HepG2 (cell line): ENCODE measurements at regions of chr15 and their contacts with region 1.

Region 1: DNA sequence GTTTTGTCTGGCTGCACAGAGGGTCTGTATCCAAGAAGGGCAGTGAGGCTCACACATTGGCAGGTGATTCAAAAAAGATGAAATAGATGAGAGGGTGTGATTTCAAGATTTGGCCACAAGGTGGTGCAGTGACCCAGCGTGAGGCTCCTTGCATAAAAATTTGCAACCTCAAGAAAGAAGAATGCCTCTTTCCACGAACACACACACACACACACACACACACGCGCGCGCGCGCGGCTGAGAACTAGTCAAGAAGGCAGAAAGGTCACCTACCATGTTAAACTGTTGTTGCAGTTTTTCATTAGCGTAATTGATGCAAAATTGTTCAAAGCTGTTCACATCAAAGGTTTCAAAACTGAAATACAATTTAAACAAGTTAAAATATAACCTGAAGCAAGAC is 39.2 kb downstream of the MYO5C start:
- DNase-seq: peak; percentile 45
- ATAC-seq: peak; percentile 38; the same call in 2 of the 3 replicates
- H3K4me3 ChIP-seq: no peak overlapping the region
- H3K27ac ChIP-seq: no peak overlapping the region
- H3K4me1 ChIP-seq: 0 out of 2 replicates have a peak, but pooled peaks cover under 1% of the 10 kb centered on the region
- H3K27me3 ChIP-seq: no peaks in the 10 kb centered on the region
- CTCF ChIP-seq: peak; percentile 82
- EP300 ChIP-seq: no peak
- POLR2A ChIP-seq: no peak
- RAD21 ChIP-seq: peak; percentile 86

Region 2: DNA sequence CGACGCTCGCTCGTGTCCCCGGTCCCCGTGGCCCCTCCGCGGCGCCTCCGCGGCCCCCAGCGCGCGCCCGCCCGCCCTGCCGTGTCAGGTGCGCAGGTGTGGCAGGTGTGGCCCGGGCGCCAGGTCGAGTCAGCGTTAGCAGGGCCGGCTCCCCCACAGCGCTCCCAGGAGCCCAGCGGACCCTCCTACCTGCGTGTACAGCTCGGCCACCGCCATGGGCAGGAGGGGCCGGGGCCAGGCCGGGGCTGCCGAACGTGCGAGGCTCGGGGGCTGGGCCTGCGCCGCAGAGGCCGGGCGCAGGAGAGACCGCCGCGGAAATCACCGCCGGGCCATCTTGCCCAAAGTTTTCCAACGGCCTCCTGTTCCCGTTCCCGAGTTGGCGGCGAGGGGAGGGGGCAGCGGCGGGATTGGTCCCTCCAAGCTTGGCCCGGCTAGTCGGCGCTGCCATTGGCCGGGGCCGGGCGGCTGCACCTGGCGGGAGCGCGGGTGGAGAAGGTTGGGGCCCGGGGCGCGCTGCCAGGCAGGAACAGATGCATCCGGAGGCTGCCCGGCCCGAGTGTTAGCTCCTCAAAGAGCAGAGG is 39.1 kb after region 1 on chr15 and contains the start of gene MYO5C:
- CTCF ChIA-PET with region 1: no interaction called
- POLR2A ChIA-PET with region 1: no interaction called
- in situ Hi-C with region 1: no loop called
- intact Hi-C with region 1: loop called (anchors 2 kb)
- DNase-seq: peak; percentile 68
- ATAC-seq: peak; percentile 96
- H3K4me3 ChIP-seq: peak within 1 kb of the TSS; percentile 68 to 87 (median 71)
- H3K27ac ChIP-seq: peak within 1 kb of the TSS; percentile 70
- H3K4me1 ChIP-seq: peaks cover 47% of the 10 kb centered on the region
- H3K27me3 ChIP-seq: no peaks in the 10 kb centered on the region
- CTCF ChIP-seq: no peak
- EP300 ChIP-seq: no peak
- POLR2A ChIP-seq: peak; percentile 70 to 71
- RAD21 ChIP-seq: peak; percentile 49; the same call in 1 of the 2 replicates
- total RNA-seq, gene MYO5C: 23.7 and 37.3 TPM in 2 replicates

Region 3: GRCh38 chr15:52318729-52319500 is 62.5 kb after region 1 on chr15:
- CTCF ChIA-PET with region 1: no interaction called
- POLR2A ChIA-PET with region 1: no interaction called
- in situ Hi-C with region 1: no loop called
- intact Hi-C with region 1: no loop called
- DNase-seq: no peak
- ATAC-seq: no peak
- H3K4me3 ChIP-seq: no peak overlapping the region
- H3K27ac ChIP-seq: no peak overlapping the region
- H3K4me1 ChIP-seq: no peaks in the 10 kb centered on the region
- H3K27me3 ChIP-seq: no peaks in the 10 kb centered on the region
- CTCF ChIP-seq: no peak
- EP300 ChIP-seq: no peak
- POLR2A ChIP-seq: no peak
- RAD21 ChIP-seq: no peak

Region 4: DNA sequence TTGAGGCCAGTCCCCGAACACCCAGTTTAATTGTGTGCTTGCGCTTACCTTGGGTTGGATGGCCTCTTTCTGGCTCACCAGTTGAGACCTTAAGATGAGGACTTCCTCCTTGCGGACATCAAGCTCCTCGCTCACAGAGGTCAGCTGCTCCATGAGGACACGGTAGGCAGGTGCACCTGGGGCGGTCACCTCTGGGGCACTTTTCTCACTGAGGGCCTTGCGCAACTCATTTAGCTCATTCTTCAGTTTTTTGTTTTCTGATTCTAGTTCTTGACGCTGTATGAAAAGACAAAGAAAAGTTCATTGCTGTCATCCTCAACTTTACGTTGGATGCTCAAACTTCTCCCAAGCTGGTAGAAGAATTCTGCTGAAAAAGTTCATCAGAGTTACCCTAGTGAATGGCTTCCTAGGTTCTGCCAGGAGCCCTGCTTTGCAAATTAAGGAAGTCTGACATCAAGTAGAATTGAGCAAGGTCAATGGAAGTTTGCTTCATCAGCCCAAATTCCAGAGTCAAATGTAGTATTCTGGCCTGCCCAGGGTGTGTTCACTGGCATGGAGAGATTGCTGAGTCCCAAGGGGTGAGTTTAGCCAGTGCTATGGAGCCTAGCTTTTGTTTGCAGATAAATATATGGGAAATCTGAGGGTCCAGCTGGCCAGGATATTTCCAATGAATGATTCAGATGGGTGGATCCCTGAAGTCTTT is 95.0 kb after region 1 on chr15:
- CTCF ChIA-PET with region 1: interaction called, 4 read pairs
- POLR2A ChIA-PET with region 1: no interaction called
- in situ Hi-C with region 1: no loop called
- intact Hi-C with region 1: loop called (anchors 5 kb)
- DNase-seq: no peak
- ATAC-seq: no peak
- H3K4me3 ChIP-seq: no peak overlapping the region
- H3K27ac ChIP-seq: no peak overlapping the region
- H3K4me1 ChIP-seq: no peaks in the 10 kb centered on the region
- H3K27me3 ChIP-seq: no peaks in the 10 kb centered on the region
- CTCF ChIP-seq: no peak
- EP300 ChIP-seq: no peak
- POLR2A ChIP-seq: no peak
- RAD21 ChIP-seq: no peak

Region 5: DNA sequence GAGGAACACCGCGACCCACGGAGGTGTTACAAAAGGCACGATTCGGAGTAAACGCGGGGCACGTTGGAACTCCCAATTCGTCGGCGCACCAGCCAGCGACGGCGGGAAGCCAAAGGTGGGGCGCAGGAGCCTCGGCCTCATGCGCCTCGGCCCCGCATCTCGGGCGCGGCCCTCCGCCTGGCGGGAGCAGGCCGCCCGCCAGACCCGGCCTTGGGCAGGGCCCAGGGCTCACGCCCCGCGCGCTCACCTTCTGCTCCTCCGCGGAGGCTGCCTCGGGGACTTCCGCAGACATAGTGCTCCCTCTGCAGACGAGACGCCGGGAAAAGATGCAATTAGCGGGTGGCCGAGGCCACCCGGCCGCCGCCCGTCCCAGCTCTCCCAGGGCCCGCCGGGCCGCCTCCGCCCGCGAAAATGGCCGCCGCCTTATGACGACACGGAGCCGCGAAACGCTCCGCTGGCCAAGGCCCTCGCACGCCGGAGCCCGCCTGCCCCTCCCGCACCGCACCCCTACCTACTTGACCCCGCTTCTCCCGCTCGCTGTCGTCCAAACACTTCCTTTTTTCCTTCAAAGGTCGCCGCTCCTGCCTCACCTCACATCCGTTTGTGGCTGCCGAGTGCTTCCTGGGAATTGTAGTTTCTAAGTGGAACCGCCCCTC is 312.4 kb after region 1 on chr15 and contains the start of gene ARPP19:
- CTCF ChIA-PET with region 1: no interaction called
- POLR2A ChIA-PET with region 1: interaction called, 3 read pairs
- in situ Hi-C with region 1: no loop called
- intact Hi-C with region 1: loop called (anchors 5 kb)
- DNase-seq: peak; percentile 94
- ATAC-seq: peak; percentile 93
- H3K4me3 ChIP-seq: peak within 1 kb of the TSS; percentile 64 to 83 (median 80)
- H3K27ac ChIP-seq: peak within 1 kb of the TSS; percentile 87
- H3K4me1 ChIP-seq: peaks cover 48% of the 10 kb centered on the region
- H3K27me3 ChIP-seq: no peaks in the 10 kb centered on the region; a peak in 1 of 5 replicates
- CTCF ChIP-seq: no peak
- EP300 ChIP-seq: peak in 1 of 2 experiments; percentile 60; a peak in 1 of 4 replicates
- POLR2A ChIP-seq: peak; percentile 68 to 69
- RAD21 ChIP-seq: no peak
- total RNA-seq, gene ARPP19: 123 and 213 TPM in 2 replicates

Region 6: DNA sequence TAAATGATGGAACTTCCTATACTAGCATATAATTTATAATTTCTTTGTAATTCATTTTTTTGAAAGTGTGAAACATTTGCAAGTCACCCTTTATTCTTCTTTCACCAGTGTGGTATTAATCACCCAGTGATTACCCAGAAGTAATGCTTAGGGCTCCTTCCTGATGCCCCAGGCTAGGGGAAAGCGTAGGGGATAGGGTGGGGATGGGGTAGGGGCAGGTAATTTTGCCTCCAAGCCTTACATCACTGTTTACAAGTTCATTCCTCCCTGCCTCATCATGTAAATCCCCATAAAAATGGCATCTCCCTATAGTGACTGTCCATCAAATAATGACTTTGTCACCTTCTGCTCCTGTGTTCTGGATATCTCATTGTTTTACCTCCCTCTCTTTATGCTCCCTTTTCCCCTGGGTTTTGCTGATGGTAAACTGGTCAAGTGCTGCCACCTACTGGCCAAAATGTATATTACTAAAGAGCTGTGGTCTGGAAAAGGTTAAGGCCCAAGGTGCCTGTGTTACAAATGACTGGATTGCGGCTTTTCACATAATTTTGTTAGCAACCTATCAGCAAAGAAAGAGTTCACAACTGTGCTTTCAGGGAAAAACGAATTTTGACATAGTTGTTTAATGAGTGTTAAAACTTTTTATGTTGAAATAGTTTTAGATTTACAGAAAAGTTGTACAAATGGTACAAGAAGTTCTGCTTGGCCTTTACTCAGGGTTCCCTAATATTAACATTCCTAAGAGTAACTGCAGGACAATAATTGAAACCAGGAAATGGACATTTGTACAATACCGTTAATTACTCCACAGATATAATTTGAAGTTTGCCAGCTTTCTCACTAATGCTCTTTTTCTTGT is 479.1 kb after region 1 on chr15:
- CTCF ChIA-PET with region 1: interaction called, 25 read pairs
- POLR2A ChIA-PET with region 1: no interaction called
- in situ Hi-C with region 1: loop called (anchors 5 kb)
- intact Hi-C with region 1: no loop called
- DNase-seq: peak; percentile 73
- ATAC-seq: peak; percentile 83
- H3K4me3 ChIP-seq: no peak overlapping the region
- H3K27ac ChIP-seq: no peak overlapping the region
- H3K4me1 ChIP-seq: peaks cover 45% of the 10 kb centered on the region
- H3K27me3 ChIP-seq: no peaks in the 10 kb centered on the region
- CTCF ChIP-seq: peak; percentile 89
- EP300 ChIP-seq: no peak
- POLR2A ChIP-seq: no peak
- RAD21 ChIP-seq: peak; percentile 78

Region 7: GRCh38 chr15:53312707-53313106 is 1056.3 kb after region 1 on chr15:
- CTCF ChIA-PET with region 1: no interaction called
- POLR2A ChIA-PET with region 1: no interaction called
- in situ Hi-C with region 1: no loop called
- intact Hi-C with region 1: no loop called
- DNase-seq: no peak
- ATAC-seq: no peak
- H3K4me3 ChIP-seq: no peak overlapping the region
- H3K27ac ChIP-seq: no peak overlapping the region
- H3K4me1 ChIP-seq: peaks cover 17% of the 10 kb centered on the region
- H3K27me3 ChIP-seq: peaks cover 0 to 3% of the 10 kb centered on the region in 2 experiments; a peak in 2 of 5 replicates
- CTCF ChIP-seq: no peak
- EP300 ChIP-seq: no peak
- POLR2A ChIP-seq: no peak
- RAD21 ChIP-seq: no peak